Gastrocnemius medialis (tissue), 4 donors: ENCODE measurements at regions of chr11 and their contacts with region 1.

Region 1: DNA sequence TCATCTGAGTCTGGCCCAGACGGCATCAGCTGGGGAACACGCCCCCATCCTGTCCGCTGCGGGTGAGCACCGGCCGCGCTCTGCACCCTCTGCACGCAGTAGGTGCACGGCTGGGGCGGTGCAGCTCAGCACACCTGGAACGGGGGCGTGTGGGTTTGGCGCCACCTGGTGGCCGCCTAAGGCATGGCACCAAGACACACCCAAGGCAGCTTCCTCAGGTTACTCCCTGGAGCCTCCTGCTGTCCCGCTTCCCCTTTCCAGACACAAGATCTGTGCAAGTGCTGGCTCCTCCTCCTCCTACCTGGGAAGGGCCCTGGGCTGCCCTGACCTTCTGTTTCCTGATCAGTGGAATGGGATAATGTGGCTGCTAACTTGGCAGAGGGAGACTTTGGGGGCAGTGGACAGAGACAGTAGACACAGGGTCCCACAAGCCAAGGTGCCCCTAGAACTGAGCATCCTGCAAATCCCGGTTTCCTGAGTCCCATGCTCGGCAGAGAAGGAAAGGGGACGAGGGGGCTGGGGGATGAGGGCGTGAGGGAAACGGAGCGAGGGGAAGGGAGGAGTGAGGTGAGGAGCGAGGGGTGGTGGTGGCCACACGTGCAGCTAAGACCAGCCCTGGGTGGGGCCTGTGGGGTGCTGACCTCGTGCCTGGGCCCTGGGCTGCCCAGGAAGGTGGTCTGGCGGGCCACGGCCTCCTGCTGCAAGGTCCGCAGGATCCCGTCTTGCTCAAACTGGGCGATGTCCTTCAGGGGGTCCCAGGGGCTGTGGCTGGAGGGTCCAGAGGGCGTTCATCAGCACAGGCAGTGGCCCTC is 34.8 kb upstream of the CARS1 start:
- DNase-seq: peak; percentile 38 to 74
- ATAC-seq: peak; percentile 77 to 82
- H3K4me3 ChIP-seq: no peak overlapping the region
- H3K27ac ChIP-seq: no peak overlapping the region
- H3K4me1 ChIP-seq: peaks cover 6 to 20% of the 10 kb centered on the region in 2 donors
- H3K27me3 ChIP-seq: no peaks in the 10 kb centered on the region
- CTCF ChIP-seq: peak; percentile 98 to 100 (median 100)
- POLR2A ChIP-seq: no peak

Region 2: GRCh38 chr11:3037040-3037944 is 54.7 kb before region 1 on chr11:
- in situ Hi-C with region 1: loop called (anchors 5 to 10 kb)
- intact Hi-C with region 1: loop called (anchors 1 kb)
- DNase-seq: peak; percentile 48 to 74
- ATAC-seq: no peak
- H3K4me3 ChIP-seq: no peak overlapping the region
- H3K27ac ChIP-seq: peak overlapping the region in 2 of 4 donors; percentile 1 to 40
- H3K4me1 ChIP-seq: peaks cover 11 to 13% of the 10 kb centered on the region in 2 donors
- H3K27me3 ChIP-seq: no peaks in the 10 kb centered on the region
- CTCF ChIP-seq: peak; percentile 77 to 94 (median 84)
- POLR2A ChIP-seq: no peak